AG04449 (cell line): ENCODE measurements at regions of chr9 and their contacts with region 1.

Region 1: GRCh38 chr9:133992780-133993634 is 883 bp upstream of the VAV2 start:
- DNase-seq: peak; percentile 44
- H3K4me3 ChIP-seq: peak overlapping the region; percentile 86
- CTCF ChIP-seq: peak; percentile 50

Region 2: GRCh38 chr9:133742849-133743444 is 250.1 kb before region 1 on chr9:
- CTCF ChIA-PET with region 1: interaction called, 12 read pairs
- POLR2A ChIA-PET with region 1: no interaction called
- DNase-seq: no peak
- H3K4me3 ChIP-seq: no peak overlapping the region
- CTCF ChIP-seq: peak; percentile 97

Region 3: GRCh38 chr9:133782157-133783130 is 210.6 kb before region 1 on chr9:
- CTCF ChIA-PET with region 1: interaction called, 364 read pairs
- POLR2A ChIA-PET with region 1: interaction called, 11 read pairs
- DNase-seq: peak; percentile 19
- H3K4me3 ChIP-seq: no peak overlapping the region
- CTCF ChIP-seq: peak; percentile 86

Region 4: DNA sequence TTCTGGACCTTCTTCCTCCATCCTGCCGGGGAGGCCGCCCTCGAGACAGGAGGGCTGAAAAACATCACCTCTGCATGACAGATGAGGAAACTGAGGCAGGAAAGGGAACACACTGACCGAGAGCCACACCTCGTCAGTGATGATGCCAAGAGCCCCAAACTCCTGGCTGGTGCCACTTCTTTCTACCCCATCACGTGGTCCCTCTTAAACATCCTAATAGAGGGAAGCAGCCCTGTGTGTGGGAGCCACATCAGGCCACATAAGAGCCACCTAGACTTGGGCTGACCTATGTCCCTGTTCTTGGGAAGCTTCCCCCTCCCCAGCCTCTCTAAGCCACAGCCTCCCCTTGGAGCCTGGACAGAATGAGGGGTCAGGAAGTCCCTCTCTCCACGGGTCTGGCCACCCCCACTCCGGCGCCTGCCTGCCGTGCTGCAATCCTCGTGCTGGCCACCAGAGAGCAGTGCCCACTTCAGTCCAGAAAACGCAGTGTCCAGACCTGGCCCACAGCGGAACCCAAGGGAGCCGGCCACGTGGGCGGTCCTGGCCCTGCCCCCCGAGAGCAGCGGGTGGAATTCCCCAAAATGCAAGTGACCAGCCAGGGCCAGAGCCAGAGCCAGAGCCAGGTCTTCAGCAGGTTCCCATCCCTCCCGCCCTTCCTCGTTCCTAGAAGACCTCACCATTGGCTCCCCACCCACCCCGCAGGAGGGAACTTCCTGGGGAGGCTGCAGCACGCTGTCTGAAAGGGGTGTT is 200.1 kb before region 1 on chr9:
- CTCF ChIA-PET with region 1: interaction called, 362 read pairs
- POLR2A ChIA-PET with region 1: no interaction called
- DNase-seq: peak; percentile 5
- H3K4me3 ChIP-seq: peak overlapping the region; percentile 8; the same call in 1 of the 2 replicates
- CTCF ChIP-seq: peak; percentile 96

Region 5: GRCh38 chr9:133813749-133814585 is 179.0 kb before region 1 on chr9:
- CTCF ChIA-PET with region 1: interaction called, 21 read pairs
- POLR2A ChIA-PET with region 1: no interaction called
- DNase-seq: no peak
- H3K4me3 ChIP-seq: no peak overlapping the region
- CTCF ChIP-seq: no peak

Region 6: DNA sequence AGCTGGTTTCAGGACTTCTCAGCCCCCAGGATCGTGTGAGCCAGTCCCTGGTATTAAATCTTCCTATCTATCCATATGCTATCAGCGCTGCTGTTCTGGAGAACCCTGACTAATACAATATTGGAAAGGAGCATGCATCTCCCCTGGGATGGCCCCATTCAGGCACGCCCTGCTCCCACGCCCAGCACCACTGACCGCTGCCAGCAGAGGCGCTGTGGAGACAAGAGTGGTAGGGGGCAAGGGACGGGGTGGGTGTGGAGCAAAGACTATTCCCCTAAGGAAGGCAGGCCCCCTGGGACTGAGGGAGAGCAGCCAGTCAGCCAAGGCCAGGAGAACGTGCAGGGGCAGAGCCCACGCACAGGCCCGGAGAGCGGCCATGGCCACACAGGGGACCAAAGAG is 116.9 kb before region 1 on chr9:
- CTCF ChIA-PET with region 1: interaction called, 20 read pairs
- POLR2A ChIA-PET with region 1: no interaction called
- DNase-seq: no peak
- H3K4me3 ChIP-seq: no peak overlapping the region
- CTCF ChIP-seq: peak; percentile 25

Region 7: GRCh38 chr9:134010310-134011173 is 17.5 kb after region 1 on chr9:
- CTCF ChIA-PET with region 1: interaction called, 56 read pairs
- POLR2A ChIA-PET with region 1: interaction called, 4 read pairs
- DNase-seq: no peak
- H3K4me3 ChIP-seq: no peak overlapping the region
- CTCF ChIP-seq: no peak

Region 8: GRCh38 chr9:134049236-134049635 is 56.2 kb after region 1 on chr9:
- CTCF ChIA-PET with region 1: no interaction called
- POLR2A ChIA-PET with region 1: no interaction called
- DNase-seq: no peak
- H3K4me3 ChIP-seq: no peak overlapping the region
- CTCF ChIP-seq: no peak

Region 9: DNA sequence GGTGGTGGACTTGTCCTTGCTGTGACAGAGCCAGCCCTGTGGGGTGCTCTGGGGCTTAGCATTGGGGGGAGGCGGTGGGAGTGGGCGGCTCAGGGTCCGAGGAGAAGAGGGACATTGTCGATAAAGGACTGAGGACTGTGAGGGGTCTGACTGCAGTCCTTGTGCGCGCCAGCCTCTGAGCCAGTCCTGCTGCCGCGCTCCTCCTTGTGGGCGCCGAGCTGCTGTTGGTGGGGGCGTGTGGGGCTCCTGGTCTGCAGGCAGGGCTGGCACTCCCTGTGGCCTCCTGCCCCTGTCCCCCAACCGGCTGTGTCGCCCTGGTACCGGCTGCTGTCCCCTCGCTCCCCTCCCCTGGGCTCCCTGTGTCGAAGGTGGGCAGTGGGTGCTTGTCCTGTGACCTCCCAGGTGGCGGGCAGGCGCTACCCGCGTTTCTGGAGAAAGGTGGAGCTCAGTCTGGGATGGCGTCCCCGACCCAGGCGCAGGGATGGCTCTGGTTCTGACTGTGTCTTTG is 164.4 kb after region 1 on chr9:
- CTCF ChIA-PET with region 1: no interaction called
- POLR2A ChIA-PET with region 1: no interaction called
- DNase-seq: no peak
- H3K4me3 ChIP-seq: no peak overlapping the region
- CTCF ChIP-seq: no peak